Tibial artery (tissue), 4 donors: ENCODE measurements at regions of chr4 and their contacts with region 1.

Region 1: GRCh38 chr4:75673027-75673958 is at the start of gene G3BP2:
- DNase-seq: peak; percentile 98 to 99
- H3K4me3 ChIP-seq: peak within 1 kb of the TSS; percentile 83 to 91
- H3K27ac ChIP-seq: peak within 1 kb of the TSS; percentile 94 to 99
- H3K4me1 ChIP-seq: peaks cover 0 to 43% (median 14%) of the 10 kb centered on the region in 4 donors
- H3K27me3 ChIP-seq: no peaks in the 10 kb centered on the region
- CTCF ChIP-seq: no peak

Region 2: DNA sequence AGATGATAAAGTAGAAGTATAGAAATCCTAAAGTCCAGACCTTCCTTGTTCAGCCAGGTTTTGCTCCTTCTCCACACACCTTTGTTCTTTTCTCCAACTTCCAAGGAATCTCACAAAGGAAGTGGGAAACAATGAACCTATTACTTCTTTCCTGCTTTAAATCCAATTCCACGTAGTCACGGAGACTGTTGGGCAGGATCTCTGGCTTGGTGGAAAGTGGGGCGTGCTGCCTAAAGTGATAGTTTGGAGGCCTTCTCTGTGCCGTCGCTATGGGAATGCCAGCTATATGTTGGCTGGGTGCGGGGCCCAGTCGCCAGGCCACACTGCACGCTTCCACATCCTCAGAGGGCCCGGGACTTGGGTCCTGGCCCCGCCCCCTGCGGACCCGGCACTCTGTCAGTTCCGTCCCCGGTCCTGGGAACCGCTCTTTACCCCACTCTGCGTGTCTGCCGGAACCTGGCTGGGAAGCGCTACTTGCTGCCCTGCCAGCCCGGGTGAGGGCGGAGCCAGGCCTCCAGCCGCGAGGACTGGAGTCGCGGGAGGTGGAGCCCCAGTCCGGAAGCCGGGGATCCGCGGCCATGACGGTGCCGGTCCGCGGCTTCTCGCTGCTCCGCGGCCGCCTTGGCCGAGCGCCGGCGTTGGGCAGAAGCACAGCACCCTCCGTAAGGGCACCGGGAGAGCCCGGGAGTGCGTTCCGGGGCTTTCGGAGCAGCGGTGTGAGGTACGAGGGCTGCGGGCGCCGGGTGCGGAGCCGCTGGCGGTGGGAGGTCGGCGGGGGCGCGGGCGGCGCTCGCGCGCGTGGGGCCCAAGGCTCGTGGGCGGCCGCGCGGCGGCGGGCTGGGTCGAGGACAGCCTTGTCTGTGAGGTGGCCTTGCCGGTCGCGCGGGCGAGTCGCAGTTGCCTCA is 1515.5 kb before region 1 on chr4 and contains the start of gene MTHFD2L:
- intact Hi-C with region 1: loop called (anchors 5 kb)
- DNase-seq: peak; percentile 91 to 97
- H3K4me3 ChIP-seq: peak within 1 kb of the TSS; percentile 66 to 68
- H3K27ac ChIP-seq: peak within 1 kb of the TSS; percentile 81 to 82
- H3K4me1 ChIP-seq: peaks cover 0 to 12% (median 5%) of the 10 kb centered on the region in 4 donors
- H3K27me3 ChIP-seq: no peaks in the 10 kb centered on the region
- CTCF ChIP-seq: no peak

Region 3: GRCh38 chr4:75555294-75556164 is 117.8 kb before region 1 on chr4 and contains the start of gene ODAPH:
- intact Hi-C with region 1: no loop called
- DNase-seq: no peak
- H3K4me3 ChIP-seq: no peak within 1 kb of the TSS
- H3K27ac ChIP-seq: no peak within 1 kb of the TSS
- H3K4me1 ChIP-seq: no peaks in the 10 kb centered on the region
- H3K27me3 ChIP-seq: peaks cover 0 to 5% of the 10 kb centered on the region in 2 donors
- CTCF ChIP-seq: no peak

Region 4: DNA sequence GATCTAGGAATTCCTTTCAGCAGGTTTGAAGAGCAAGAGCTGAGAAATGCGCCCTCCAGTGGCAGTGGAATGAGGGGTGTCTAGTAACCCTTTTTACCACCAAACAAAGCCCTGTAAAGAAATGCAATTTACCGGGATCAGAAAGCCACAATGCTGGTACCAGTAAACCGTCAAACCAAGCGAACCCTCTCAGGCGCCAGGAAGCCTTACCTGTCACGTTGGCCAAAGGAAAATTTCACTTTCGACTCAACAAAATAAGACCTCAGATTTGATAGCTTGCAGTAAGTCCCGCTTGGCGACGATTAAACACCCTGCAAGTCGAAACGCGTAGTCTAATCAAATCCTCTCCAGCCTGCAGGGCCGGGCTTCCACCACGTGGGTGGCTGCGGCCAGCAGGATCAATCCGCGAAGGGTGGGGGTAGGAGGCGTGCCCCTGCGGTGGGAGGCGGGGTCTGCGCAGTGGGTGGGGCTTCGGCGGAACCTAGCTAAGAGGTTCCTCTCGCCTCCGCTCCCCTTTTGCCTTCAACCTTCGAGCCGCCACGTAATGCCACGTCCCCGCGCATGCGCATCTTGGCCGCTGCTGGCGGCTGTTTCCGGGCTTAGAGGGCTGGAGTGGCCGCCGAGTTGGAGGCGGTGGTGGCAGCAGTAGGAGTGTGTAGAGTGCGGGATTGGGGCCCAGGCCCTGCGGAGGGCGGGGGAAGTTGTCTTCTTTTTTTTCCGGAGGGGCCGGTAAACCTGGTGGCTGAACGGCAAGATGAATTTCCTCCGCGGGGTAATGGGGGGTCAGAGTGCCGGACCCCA is 51.0 kb after region 1 on chr4 and contains the start of gene USO1:
- intact Hi-C with region 1: loop called (anchors 1 kb)
- DNase-seq: peak; percentile 99 to 100
- H3K4me3 ChIP-seq: peak within 1 kb of the TSS; percentile 71 to 93
- H3K27ac ChIP-seq: peak within 1 kb of the TSS; percentile 94 to 98
- H3K4me1 ChIP-seq: peaks cover 5 to 50% (median 29%) of the 10 kb centered on the region in 4 donors
- H3K27me3 ChIP-seq: no peaks in the 10 kb centered on the region
- CTCF ChIP-seq: peak; percentile 60 to 73